PC-9 (cell line): ENCODE measurements at regions of chr15 and their contacts with region 1.

Region 1: GRCh38 chr15:50496692-50497091 is 49.8 kb downstream of the USP50 start:
- DNase-seq: no peak
- H3K4me3 ChIP-seq: no peak overlapping the region
- H3K27ac ChIP-seq: no peak overlapping the region
- H3K4me1 ChIP-seq: no peaks in the 10 kb centered on the region
- H3K27me3 ChIP-seq: no peaks in the 10 kb centered on the region
- CTCF ChIP-seq: no peak

Region 2: GRCh38 chr15:50051803-50052419 is 444.8 kb before region 1 on chr15:
- CTCF ChIA-PET with region 1: interaction called, 13 read pairs
- POLR2A ChIA-PET with region 1: no interaction called
- intact Hi-C with region 1: no loop called
- DNase-seq: peak; percentile 32 to 75
- H3K4me3 ChIP-seq: no peak overlapping the region
- H3K27ac ChIP-seq: peak overlapping the region; percentile 14; the same call in 1 of the 2 replicates
- H3K4me1 ChIP-seq: 0 out of 2 replicates have a peak, but pooled peaks cover 5% of the 10 kb centered on the region
- H3K27me3 ChIP-seq: no peaks in the 10 kb centered on the region
- CTCF ChIP-seq: peak; percentile 78